ENCODE measurements at regions of chr14 and their contacts with region 1.

Region 1: GRCh38 chr14:24241829-24242443 is 487 bp downstream of the TINF2 start:
- DNase-seq: peak; percentile 93 to 97 (median 97)
- H3K4me3 ChIP-seq: peak overlapping the region; percentile 41 to 94 (median 85)
- H3K27ac ChIP-seq: peak overlapping the region; percentile 96 to 99
- H3K4me1 ChIP-seq: peaks cover 12 to 41% (median 30%) of the 10 kb centered on the region in 4 experiments
- H3K27me3 ChIP-seq: no peaks in the 10 kb centered on the region

Region 2: DNA sequence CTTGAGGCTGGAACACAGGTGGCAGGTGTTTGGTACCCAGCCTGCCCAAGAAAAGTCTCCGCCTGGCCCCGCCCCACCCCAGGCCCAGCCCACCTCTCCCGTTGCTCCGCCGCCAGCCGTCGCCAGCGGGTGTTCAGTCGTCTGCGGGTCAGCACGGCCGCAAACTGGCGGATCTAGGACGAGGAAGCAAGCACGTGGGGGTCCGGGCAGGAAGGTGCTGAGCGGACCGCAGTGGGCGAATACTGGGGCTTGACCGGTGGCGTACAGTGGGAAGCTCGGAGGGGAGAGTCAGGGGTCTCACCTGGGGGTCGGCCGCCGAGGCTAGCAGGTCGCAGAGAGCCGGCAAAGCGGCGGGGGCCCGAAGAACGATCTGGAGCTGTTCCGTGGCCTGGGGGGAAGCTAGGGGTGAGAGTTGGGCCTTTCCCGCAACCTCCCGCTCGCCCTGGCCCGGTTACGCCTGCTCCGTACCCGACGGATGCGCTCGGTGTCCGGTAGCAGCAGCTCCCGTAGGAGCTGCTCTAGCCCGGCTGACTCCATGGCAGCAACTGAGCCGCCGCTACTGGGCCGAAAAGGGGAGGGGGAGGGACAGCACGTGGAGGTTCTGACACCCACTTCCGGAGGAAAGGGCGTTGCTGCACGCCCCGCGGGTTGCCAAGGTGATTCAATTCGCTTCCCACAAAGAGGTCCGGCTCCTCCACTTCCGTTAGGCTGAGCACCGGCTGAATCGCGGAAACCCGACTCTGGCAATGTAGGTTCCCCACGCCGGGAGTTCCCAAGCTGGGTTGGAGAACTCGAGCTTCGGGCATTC is 53.5 kb before region 1 on chr14 and contains the start of gene IPO4:
- CTCF ChIA-PET with region 1: interaction called, 14 read pairs
- POLR2A ChIA-PET with region 1: no interaction called
- DNase-seq: peak; percentile 98
- H3K4me3 ChIP-seq: peak within 1 kb of the TSS; percentile 65 to 90 (median 79)
- H3K27ac ChIP-seq: peak within 1 kb of the TSS; percentile 46 to 77
- H3K4me1 ChIP-seq: peaks cover 0 to 25% (median 20%) of the 10 kb centered on the region in 4 experiments
- H3K27me3 ChIP-seq: no peaks in the 10 kb centered on the region

Region 3: DNA sequence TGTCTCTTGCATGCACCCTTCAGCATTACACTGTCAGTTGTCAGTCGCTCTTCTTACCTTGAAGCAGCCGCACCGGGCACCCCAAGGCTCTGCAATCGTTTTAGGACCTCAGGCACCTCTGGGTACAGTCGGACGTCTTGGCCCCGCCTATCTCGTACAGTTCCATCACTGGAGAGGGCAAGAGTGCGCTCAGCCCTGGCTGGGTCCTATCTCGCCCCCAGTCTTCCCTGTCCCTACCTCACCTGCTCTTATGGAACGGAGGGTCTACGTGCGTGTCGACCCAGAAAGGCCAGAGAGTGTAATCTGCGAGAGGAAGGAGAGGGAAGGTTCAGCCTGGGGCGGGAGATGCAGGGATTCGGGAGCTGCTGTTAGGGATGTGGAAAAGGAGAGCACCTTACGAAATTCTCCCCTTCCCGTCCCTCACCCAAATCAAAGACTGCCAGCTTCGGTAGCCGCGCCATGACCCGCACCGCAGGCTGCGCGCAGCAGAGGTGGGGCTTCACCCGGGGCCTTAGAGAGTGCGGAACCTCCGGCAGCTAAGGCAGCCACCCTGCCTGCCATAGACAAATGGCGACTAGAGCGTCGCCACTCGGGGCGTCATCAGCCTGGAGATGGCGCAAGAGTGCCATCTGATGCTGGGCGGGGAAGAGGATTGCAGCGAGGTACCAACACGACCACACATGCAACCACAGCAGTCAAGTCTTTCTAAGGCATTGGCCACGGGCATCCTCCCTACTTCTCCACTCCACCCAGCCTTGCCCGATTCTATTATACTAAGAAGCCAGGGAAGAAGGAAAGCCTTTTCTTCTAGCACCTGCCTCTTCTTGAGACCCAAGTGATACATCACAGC is 26.2 kb before region 1 on chr14 and contains the start of gene MDP1:
- CTCF ChIA-PET with region 1: interaction called, 31 read pairs
- POLR2A ChIA-PET with region 1: interaction called, 6 read pairs
- DNase-seq: peak; percentile 94 to 97 (median 96)
- H3K4me3 ChIP-seq: peak within 1 kb of the TSS; percentile 53 to 99 (median 99)
- H3K27ac ChIP-seq: peak within 1 kb of the TSS; percentile 54 to 84
- H3K4me1 ChIP-seq: peaks cover 7 to 33% (median 26%) of the 10 kb centered on the region in 4 experiments
- H3K27me3 ChIP-seq: no peaks in the 10 kb centered on the region

Region 4: DNA sequence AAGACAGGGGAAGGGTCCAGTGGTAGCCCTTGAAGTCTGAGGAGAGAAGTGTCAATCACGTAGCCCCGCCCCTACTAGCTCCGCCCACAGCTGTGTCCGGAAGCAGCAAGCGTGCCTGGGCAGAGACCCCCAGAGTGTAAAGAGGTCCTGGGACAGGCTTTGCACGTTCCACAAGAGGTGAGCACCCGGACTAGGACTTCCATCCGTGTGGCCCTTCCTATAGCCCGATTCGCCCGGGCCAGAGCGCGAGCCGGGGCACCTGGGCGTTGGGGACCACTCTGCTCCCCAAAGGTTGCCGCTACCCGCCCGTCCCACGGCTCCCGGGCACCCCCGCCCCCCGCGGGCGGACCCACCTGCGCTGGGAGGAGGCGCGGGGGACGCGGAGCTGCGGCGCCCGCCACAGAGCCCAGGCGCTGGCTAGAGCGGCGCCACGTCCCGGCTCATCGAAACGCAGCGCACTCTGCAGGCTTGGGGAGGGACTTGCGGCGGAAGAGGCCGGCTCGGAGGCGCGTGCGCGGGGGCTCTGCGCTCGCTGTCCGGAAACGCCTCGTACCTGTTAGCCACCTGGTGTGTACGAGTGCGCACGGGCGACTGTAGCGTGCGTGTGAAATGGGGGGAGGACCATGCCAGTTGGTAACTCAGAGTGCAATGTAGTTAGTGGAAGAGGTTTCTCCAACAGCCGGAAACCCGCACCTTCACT is 29.3 kb after region 1 on chr14 and contains the start of gene RABGGTA:
- CTCF ChIA-PET with region 1: interaction called, 35 read pairs
- POLR2A ChIA-PET with region 1: interaction called, 6 read pairs
- DNase-seq: peak; percentile 93 to 96 (median 96)
- H3K4me3 ChIP-seq: peak within 1 kb of the TSS; percentile 74 to 96 (median 85)
- H3K27ac ChIP-seq: peak within 1 kb of the TSS; percentile 80 to 94
- H3K4me1 ChIP-seq: peaks cover 2 to 38% (median 18%) of the 10 kb centered on the region in 4 experiments
- H3K27me3 ChIP-seq: no peaks in the 10 kb centered on the region

Region 5: GRCh38 chr14:24279301-24280186 is 37.6 kb after region 1 on chr14:
- CTCF ChIA-PET with region 1: interaction called, 30 read pairs
- POLR2A ChIA-PET with region 1: interaction called, 4 read pairs
- DNase-seq: peak; percentile 79 to 89 (median 88)
- H3K4me3 ChIP-seq: peak overlapping the region in 1 of 7 experiments; percentile 1
- H3K27ac ChIP-seq: no peak overlapping the region
- H3K4me1 ChIP-seq: peaks cover 19 to 62% (median 38%) of the 10 kb centered on the region in 4 experiments
- H3K27me3 ChIP-seq: no peaks in the 10 kb centered on the region

Region 6: DNA sequence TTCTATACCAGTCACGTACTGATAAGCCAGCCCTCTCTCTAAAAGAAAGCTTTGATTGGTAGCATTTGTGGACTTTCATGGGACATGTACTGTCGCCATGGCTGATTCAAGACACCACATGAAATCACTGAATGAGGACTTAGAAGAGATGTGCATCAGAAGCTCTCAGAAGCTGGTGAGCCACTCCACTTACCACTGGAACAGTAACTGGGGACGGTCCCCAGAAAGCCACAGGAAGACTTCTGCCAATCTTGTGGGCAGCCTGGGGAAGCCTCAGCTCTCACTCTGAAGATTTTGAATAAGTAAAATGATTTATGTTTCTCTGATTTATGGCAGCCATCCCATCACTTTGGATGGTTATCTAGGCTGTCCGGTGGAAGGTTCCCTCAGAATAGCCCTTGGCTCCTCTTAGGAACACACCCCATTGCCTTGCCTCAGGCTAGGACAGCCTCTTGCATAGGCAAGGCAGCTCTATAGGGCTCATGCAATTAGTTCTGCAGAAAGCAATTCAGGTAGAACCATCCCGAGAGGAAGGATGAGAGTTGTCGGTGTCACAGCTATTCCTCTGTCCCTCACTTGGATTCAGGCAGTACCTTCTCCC is 47.8 kb after region 1 on chr14:
- CTCF ChIA-PET with region 1: interaction called, 207 read pairs
- POLR2A ChIA-PET with region 1: no interaction called
- DNase-seq: peak in 2 of 3 donors; percentile 42 to 47
- H3K4me3 ChIP-seq: no peak overlapping the region
- H3K27ac ChIP-seq: no peak overlapping the region
- H3K4me1 ChIP-seq: no peaks in the 10 kb centered on the region
- H3K27me3 ChIP-seq: no peaks in the 10 kb centered on the region

Measured in common myeloid progenitor, CD34-positive (primary cell).